Activated T-helper 2 cell treated with anti-CD3 and anti-CD28 coated beads, Interferon-gamma antibody, Interleukin-2, Interleukin-4, amounts not matched to agents 10 μg/mL and 5 μg/mL and 100 μg/mL, durations not matched to agents 14 hours and 24 hours and 36 hours (primary cell): ENCODE measurements at regions of chr13 and their contacts with region 1.

Region 1: GRCh38 chr13:79393564-79394249 is 12.3 kb downstream of the RBM26 start:
- DNase-seq: peak; percentile 32
- H3K4me3 Mint-ChIP-seq: peak overlapping the region; percentile 70
- H3K27ac Mint-ChIP-seq: peak overlapping the region; percentile 74
- H3K4me1 Mint-ChIP-seq: peaks cover 53% of the 10 kb centered on the region
- H3K27me3 Mint-ChIP-seq: no peaks in the 10 kb centered on the region

Region 2: DNA sequence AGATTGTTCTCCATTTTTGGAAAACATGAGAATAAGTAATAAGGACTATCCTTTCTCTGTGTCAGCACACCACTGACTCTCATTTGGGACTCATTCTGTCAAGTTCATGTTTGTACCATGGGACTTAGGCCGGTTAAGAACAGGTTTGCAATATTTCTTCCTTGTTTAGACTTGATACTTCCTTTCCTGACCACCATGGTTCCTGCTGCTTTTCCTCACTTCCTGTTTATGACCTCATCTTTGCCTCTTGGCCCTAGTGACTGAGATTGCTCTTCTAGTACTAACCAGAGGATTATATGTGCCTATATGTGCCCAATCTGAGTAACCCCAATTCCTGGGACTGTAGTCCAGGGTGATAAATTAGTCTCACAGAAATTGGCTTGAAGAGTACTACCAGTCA is 54.7 kb after region 1 on chr13:
- intact Hi-C with region 1: no loop called
- DNase-seq: no peak
- H3K4me3 Mint-ChIP-seq: no peak overlapping the region
- H3K27ac Mint-ChIP-seq: peak overlapping the region; percentile 59
- H3K4me1 Mint-ChIP-seq: peaks cover 75% of the 10 kb centered on the region
- H3K27me3 Mint-ChIP-seq: no peaks in the 10 kb centered on the region

Region 3: GRCh38 chr13:79740991-79741390 is 347.3 kb after region 1 on chr13:
- intact Hi-C with region 1: no loop called
- DNase-seq: no peak
- H3K4me3 Mint-ChIP-seq: no peak overlapping the region
- H3K27ac Mint-ChIP-seq: no peak overlapping the region
- H3K4me1 Mint-ChIP-seq: no peaks in the 10 kb centered on the region
- H3K27me3 Mint-ChIP-seq: no peaks in the 10 kb centered on the region

Region 4: GRCh38 chr13:80048802-80049201 is 655.1 kb after region 1 on chr13:
- intact Hi-C with region 1: loop called (anchors 5 kb)
- DNase-seq: peak; percentile 42
- H3K4me3 Mint-ChIP-seq: no peak overlapping the region
- H3K27ac Mint-ChIP-seq: peak overlapping the region; percentile 48
- H3K4me1 Mint-ChIP-seq: peaks cover 11% of the 10 kb centered on the region
- H3K27me3 Mint-ChIP-seq: peaks cover 10% of the 10 kb centered on the region